AG04449 (cell line): ENCODE measurements at regions of chr1 and their contacts with region 1.

Region 1: GRCh38 chr1:209989525-209989924 is 51.5 kb downstream of the SYT14 start:
- DNase-seq: no peak
- H3K4me3 ChIP-seq: no peak overlapping the region
- CTCF ChIP-seq: no peak

Region 2: GRCh38 chr1:209805875-209806760 is 183.4 kb before region 1 on chr1 and contains the start of gene IRF6:
- CTCF ChIA-PET with region 1: no interaction called
- POLR2A ChIA-PET with region 1: no interaction called
- DNase-seq: no peak
- H3K4me3 ChIP-seq: peak within 1 kb of the TSS; percentile 67
- CTCF ChIP-seq: no peak

Region 3: DNA sequence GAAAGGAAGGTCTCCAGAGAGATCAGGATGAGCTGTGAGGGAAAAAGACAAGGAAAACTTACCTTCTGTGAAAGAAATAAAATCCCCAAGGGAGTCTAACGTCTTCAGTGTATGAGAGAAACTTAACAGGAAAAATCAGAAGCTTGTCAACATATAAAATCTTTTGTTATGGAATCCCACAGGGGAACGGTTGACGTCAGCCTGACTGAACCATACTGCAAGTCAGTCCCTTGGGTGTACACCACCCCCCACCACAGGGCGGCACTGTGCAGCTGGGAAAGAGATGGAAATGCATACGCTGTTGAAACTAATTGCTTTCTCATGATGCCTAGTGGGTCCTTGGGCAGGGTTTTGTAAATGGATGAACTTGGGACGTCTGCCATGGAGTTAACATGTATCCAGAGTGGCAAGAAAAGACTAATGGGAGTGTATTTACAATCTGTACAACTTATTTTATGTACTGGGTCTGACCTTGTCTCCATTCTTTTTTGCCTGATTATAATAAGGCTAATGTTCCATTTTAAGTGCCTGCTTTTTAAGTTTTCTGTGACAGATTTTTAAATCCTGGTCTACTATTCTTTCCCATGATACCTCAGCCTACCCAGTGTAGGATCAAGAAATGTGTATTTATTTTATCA is 139.1 kb before region 1 on chr1:
- CTCF ChIA-PET with region 1: interaction called, 522 read pairs
- POLR2A ChIA-PET with region 1: no interaction called
- DNase-seq: peak; percentile 77
- H3K4me3 ChIP-seq: no peak overlapping the region
- CTCF ChIP-seq: peak; percentile 86

Region 4: DNA sequence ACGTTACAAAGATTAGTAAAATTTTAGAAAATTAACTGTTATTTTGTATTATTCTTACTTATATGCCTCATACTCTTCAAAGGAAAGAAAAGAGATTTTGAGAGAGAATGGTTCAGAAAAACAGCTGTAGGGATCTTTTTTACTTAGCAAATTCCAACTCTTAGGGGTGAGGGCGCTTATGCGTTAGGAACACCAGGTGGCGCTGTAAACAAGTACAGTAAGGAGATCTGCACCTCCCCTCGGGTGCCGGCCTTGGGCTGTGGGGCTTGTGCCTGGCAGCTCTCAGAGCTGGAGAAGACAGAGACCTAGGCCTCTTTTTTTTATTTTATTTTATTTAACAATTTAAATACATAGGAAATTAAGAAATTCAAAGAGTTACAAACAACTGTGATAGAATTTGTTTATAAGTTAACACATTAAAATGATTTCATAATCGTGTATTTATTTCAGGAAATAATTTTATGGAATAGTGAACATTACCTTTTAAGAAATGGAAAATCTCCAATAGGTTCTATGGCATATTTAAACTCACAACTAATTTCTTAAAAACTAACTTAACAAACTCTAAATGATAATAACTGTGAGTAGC is 129.1 kb before region 1 on chr1:
- CTCF ChIA-PET with region 1: interaction called, 522 read pairs
- POLR2A ChIA-PET with region 1: no interaction called
- DNase-seq: peak; percentile 46
- H3K4me3 ChIP-seq: no peak overlapping the region
- CTCF ChIP-seq: peak; percentile 82

Region 5: GRCh38 chr1:209870151-209870831 is 119.2 kb before region 1 on chr1:
- CTCF ChIA-PET with region 1: interaction called, 52 read pairs
- POLR2A ChIA-PET with region 1: no interaction called
- DNase-seq: no peak
- H3K4me3 ChIP-seq: no peak overlapping the region
- CTCF ChIP-seq: no peak

Region 6: DNA sequence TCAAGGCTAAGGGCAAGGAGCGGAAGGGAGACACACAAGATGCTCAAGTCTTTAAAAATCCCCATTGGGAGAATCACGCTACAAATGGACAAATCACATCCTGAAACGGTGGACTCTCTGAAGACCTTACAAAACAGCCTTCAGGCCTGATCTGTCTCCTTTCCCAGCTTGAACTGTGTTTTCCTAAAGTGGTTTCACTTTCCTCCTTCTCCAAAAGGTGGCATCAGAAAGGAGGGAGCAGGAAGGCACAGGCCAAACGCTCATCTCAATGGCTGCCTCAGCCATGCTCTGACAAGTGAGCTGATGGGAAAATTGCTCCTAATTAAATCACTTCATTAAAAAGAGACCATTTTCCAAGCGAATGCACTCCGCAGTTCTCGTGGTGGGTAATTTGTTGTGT is 114.0 kb before region 1 on chr1:
- CTCF ChIA-PET with region 1: interaction called, 52 read pairs
- POLR2A ChIA-PET with region 1: no interaction called
- DNase-seq: peak; percentile 36
- H3K4me3 ChIP-seq: peak overlapping the region; percentile 19; the same call in 1 of the 2 replicates
- CTCF ChIP-seq: peak; percentile 78

Region 7: GRCh38 chr1:209965996-209966395 is 23.5 kb before region 1 on chr1:
- CTCF ChIA-PET with region 1: interaction called, 12 read pairs
- POLR2A ChIA-PET with region 1: no interaction called
- DNase-seq: no peak
- H3K4me3 ChIP-seq: no peak overlapping the region
- CTCF ChIP-seq: no peak